ENCODE measurements at regions of chr9 and their contacts with region 1.

Region 1: DNA sequence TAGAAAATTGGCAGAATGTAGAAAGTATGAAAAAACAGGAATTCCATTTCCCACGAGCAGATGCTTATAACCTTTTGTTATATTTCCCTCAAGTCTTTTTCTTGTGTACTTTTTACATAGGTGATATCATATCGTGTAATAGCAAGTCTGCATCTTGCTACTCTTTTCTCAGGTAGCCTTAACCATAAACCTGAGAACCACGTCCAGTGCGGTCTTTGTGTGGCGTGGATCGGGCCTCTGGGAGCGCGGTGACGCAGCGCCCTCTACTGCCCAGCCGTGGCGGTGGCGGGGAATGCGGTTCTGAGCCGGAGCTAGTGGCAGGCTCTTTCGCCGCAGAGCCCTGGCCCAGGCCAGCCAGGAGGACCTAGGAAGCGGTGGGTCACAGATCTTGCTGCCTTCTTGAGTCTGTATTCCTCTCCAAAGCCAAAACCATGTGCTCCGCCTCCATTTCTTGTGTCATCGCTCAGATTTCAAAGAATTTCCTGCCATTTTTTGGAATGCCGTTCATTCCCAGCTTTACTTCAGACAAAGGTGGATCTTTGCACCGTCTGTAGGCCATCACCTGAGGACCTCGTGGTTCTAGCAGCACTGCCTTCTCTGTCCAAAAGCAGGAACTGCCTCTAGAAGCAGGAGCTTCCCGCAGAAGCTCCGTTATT is 71.9 kb downstream of the MVB12B start:
- DNase-seq: peak; percentile 86
- ATAC-seq: peak; percentile 90
- H3K4me3 Mint-ChIP-seq: no peak overlapping the region
- H3K27ac Mint-ChIP-seq: no peak overlapping the region
- H3K4me1 Mint-ChIP-seq: peaks cover 23% of the 10 kb centered on the region
- H3K27me3 Mint-ChIP-seq: no peaks in the 10 kb centered on the region
- CTCF ChIP-seq: peak; percentile 92

Region 2: GRCh38 chr9:126301985-126302603 is 96.4 kb before region 1 on chr9:
- CTCF ChIA-PET with region 1: interaction called, 23 read pairs
- POLR2A ChIA-PET with region 1: no interaction called
- DNase-seq: peak; percentile 61
- ATAC-seq: peak; percentile 88
- H3K4me3 Mint-ChIP-seq: no peak overlapping the region
- H3K27ac Mint-ChIP-seq: no peak overlapping the region
- H3K4me1 Mint-ChIP-seq: no peaks in the 10 kb centered on the region; the same call in 1 of the 2 replicates
- H3K27me3 Mint-ChIP-seq: no peaks in the 10 kb centered on the region
- CTCF ChIP-seq: no peak

Region 3: GRCh38 chr9:126326228-126327005 is 72.1 kb before region 1 on chr9 and contains the start of gene MVB12B:
- CTCF ChIA-PET with region 1: interaction called, 14 read pairs
- POLR2A ChIA-PET with region 1: no interaction called
- DNase-seq: peak; percentile 49
- ATAC-seq: peak; percentile 50
- H3K4me3 Mint-ChIP-seq: peak within 1 kb of the TSS; percentile 72
- H3K27ac Mint-ChIP-seq: no peak within 1 kb of the TSS
- H3K4me1 Mint-ChIP-seq: peaks cover 12% of the 10 kb centered on the region
- H3K27me3 Mint-ChIP-seq: peaks cover 14% of the 10 kb centered on the region
- CTCF ChIP-seq: no peak
- total RNA-seq, gene MVB12B: 4.9 to 5.7 TPM (median 5.5 TPM) in 3 replicates

Region 4: DNA sequence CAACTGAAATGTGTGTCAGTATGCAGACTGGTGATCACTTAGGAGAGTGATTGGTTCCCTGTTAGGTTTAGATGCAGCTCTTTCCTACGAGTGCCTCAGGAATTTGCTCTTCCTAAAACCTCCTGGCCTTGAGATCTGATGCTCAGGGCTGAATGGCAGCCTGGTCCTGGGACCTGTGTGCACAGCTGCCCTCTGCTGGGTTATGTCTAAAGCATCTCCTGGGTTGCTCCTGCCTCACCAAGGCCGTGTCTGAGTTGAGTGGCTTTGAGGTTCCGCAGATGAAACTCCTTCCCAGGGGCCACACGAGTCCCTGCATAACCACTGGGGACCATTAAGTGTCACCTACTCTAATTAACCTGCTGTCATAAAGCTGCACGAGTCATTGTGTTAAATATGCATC is 12.4 kb before region 1 on chr9:
- CTCF ChIA-PET with region 1: interaction called, 17 read pairs
- POLR2A ChIA-PET with region 1: no interaction called
- DNase-seq: peak; percentile 32
- ATAC-seq: peak; percentile 93
- H3K4me3 Mint-ChIP-seq: no peak overlapping the region
- H3K27ac Mint-ChIP-seq: no peak overlapping the region
- H3K4me1 Mint-ChIP-seq: peaks cover 18% of the 10 kb centered on the region
- H3K27me3 Mint-ChIP-seq: no peaks in the 10 kb centered on the region
- CTCF ChIP-seq: no peak

Region 5: DNA sequence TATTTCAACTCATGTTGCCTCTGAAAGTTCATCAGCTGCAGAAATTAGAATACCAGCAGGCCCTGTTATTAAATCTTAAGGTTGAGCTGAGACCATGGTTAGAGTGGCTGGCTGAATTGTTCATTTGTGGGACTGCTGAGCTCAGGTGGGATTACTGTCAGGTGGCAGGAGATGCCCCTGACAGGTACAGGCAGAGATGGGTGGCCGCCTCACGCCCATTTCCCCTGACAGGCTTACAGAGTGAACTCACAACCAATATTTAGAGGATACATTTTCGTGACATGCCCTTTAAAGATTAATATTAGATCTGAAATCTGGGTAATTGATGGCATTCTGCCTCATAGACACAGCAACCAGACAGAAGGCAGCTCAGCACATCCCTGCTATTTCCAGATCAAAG is 64.1 kb after region 1 on chr9:
- CTCF ChIA-PET with region 1: interaction called, 12 read pairs
- POLR2A ChIA-PET with region 1: no interaction called
- DNase-seq: no peak
- ATAC-seq: no peak
- H3K4me3 Mint-ChIP-seq: no peak overlapping the region
- H3K27ac Mint-ChIP-seq: no peak overlapping the region
- H3K4me1 Mint-ChIP-seq: no peaks in the 10 kb centered on the region
- H3K27me3 Mint-ChIP-seq: no peaks in the 10 kb centered on the region
- CTCF ChIP-seq: no peak

Region 6: GRCh38 chr9:126500684-126501382 is 102.3 kb after region 1 on chr9:
- CTCF ChIA-PET with region 1: interaction called, 13 read pairs
- POLR2A ChIA-PET with region 1: no interaction called
- DNase-seq: peak; percentile 92
- ATAC-seq: peak; percentile 78
- H3K4me3 Mint-ChIP-seq: peak overlapping the region; percentile 77
- H3K27ac Mint-ChIP-seq: no peak overlapping the region
- H3K4me1 Mint-ChIP-seq: peaks cover 13% of the 10 kb centered on the region
- H3K27me3 Mint-ChIP-seq: peaks cover 12% of the 10 kb centered on the region
- CTCF ChIP-seq: peak; percentile 97